Motor neuron (in vitro differentiated cells): ENCODE measurements at regions of chr12 and their contacts with region 1.

Region 1: DNA sequence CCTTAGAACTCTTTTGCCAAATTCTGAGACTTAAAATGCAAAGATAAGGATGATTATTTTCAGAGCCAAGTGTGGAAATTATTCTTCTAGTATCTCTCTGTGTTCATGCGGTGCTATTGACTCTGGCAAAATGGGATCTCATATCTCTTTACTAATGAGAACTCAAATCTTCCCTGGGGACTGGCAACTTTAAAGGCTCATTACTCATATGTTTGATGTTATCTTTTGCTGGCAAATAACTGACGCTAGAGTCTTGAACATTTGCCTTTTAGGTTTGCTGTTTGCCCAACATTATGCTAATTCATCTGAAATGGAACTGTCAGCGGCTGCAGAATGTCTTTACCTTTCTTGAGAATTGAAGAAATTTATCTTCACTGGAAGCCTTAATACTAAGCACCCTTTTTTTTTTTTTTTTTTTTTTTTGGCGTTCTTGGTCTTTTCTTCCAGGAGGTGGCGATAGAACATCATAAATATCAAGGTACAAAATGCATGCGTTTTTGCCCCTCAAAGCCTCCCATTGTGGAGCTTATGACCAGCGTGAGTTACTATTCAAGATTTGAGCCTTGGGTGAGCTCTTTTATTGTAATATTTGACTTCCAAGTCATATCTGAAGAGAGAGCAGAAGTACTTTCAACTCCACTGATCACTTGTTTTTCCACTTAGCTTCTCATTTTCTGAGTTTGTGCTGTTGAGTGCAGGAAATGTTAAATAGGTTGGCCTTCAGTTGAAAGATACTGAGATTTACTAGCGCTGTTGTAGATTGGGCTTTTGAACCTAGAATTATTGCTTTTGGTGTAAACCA is 86.6 kb downstream of the CAND1 start:
- ATAC-seq: peak; percentile 7 to 76 (median 63)
- H3K4me3 ChIP-seq: no peak overlapping the region
- H3K27ac ChIP-seq: no peak overlapping the region
- H3K4me1 ChIP-seq: peaks cover 0 to 8% of the 10 kb centered on the region in 2 donors

Region 2: DNA sequence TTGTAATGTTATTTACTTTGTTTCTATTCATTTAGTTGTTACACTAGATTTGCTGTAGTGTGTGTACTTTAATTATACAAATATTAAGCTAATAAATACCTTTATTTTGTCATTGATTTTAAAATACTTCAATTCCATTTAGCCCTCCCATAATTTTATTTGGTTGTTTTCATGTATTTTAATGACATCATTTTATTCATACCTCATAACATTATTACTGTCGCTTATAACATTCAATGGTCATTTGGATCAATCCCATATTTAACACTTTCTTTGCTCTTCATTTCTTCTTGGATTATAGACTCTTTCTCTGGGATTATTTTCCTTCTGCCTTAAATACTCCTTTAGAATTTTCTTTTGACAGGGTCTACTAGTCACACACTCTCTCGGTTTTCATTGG is 173.2 kb before region 1 on chr12:
- in situ Hi-C with region 1: no loop called
- ATAC-seq: no peak
- H3K4me3 ChIP-seq: no peak overlapping the region
- H3K27ac ChIP-seq: no peak overlapping the region
- H3K4me1 ChIP-seq: no peaks in the 10 kb centered on the region

Region 3: DNA sequence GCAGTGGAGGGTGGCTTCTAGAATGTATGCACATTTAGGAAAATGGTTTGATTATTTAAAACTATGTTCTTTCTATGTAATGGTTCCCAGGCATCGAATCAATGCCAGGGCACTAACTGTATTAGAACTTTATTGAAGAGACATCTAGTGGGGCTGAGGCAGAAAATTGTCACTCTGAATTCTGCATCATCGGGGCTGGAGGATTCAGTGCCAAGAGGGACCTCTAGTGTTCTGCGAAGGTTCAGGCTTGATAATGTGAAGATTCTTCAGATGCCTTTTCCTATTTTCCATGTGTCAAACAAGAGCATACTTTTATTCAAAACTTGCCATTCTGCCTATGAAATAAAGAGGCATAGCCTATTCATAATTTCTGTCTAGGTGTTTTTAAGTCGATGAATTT is 59.7 kb after region 1 on chr12:
- in situ Hi-C with region 1: loop called in 1 of 9 experiments (anchors 10 kb)
- ATAC-seq: peak in 5 of 8 experiments; percentile 49 to 74 (median 68)
- H3K4me3 ChIP-seq: no peak overlapping the region
- H3K27ac ChIP-seq: no peak overlapping the region
- H3K4me1 ChIP-seq: peaks cover 0 to 7% of the 10 kb centered on the region in 2 donors